ENCODE measurements at regions of chr12 and their contacts with region 1.

Region 1: GRCh38 chr12:6788972-6789924 is at the start of gene CD4:
- DNase-seq: no peak
- H3K4me3 ChIP-seq: no peak within 1 kb of the TSS
- H3K27ac ChIP-seq: no peak within 1 kb of the TSS
- H3K4me1 ChIP-seq: no peaks in the 10 kb centered on the region
- H3K27me3 ChIP-seq: no peaks in the 10 kb centered on the region
- CTCF ChIP-seq: no peak
- EP300 ChIP-seq: no peak
- POLR2A ChIP-seq: no peak
- total RNA-seq, gene CD4: 2.1 to 12.5 (median 10.3) TPM

Region 2: DNA sequence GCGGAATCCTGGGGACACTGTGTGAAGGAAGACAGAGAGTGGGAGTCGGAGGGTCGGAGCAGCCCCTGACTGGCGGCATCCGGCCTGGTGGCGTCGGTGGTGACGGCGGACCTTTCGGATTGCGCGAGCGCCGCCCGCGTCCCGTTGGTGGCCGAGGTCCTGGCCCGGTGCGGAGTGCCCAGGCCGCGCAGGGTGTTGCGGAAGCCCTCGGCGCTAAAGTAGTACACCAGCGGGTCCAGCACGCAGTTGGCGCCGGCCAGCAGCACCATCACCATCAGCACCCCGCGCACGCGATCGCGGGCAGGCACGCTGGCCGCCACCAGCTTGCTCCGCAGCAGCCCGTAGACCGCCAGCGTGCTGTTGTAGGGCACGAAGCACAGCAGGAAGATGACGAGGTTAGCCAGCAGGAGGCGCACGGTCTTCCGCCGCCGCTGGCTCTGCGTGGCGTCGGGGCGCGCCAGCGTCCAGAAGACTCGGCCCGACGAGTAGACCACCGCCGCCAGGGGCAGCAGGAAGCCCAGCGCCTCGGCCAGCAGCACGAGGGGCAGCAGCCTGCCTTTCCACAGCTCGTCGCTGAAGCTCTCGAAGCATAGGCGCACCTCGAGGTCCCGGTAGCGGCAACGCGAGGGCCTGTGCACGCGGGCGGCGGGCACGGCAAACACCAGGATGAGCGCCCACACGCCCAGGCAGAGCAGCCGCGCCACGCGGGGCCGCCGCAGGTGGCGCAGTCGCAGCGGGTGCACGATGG is 168.9 kb before region 1 on chr12:
- intact Hi-C with region 1: loop called in 1 of 4 experiments (anchors 10 kb)
- DNase-seq: peak in 1 of 5 donors; percentile 30
- H3K4me3 ChIP-seq: no peak overlapping the region
- H3K27ac ChIP-seq: no peak overlapping the region
- H3K4me1 ChIP-seq: no peaks in the 10 kb centered on the region
- H3K27me3 ChIP-seq: no peaks in the 10 kb centered on the region
- CTCF ChIP-seq: no peak
- EP300 ChIP-seq: no peak
- POLR2A ChIP-seq: no peak

Region 3: DNA sequence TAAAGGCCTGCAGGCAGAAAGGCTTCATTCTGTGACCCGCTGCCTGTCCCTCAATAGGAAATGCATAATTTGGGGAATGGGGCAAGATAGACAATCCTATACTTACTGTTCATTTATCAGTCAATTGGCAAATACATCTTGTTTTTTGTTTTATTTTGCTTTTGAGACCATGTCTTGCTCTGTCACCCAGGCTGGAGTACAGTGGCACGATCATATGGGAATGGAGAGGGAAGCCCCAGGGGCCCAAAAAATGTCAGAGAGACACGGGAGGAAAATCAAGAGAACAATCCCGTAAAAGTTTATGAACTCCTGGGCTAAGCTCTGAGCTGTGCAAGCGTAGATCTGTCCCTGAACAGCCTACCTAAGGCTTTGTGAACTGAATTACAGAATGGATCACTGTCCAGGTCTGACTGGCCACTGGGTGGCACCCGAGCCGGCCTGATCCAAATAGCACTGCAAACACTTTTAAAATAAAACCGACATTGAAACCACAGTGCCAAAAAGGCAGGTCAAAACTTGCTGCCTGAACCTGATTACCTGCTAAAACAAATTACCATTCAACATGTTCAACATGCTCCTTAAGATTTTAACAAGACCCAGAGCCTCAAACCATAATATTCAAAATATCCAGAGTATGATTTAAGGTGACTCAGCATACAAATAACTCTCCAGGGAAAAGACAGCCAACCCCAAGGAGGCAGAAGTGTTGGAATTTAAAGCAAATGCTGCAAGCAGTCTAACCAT is 53.6 kb before region 1 on chr12:
- intact Hi-C with region 1: loop called in 1 of 4 experiments (anchors 10 kb)
- DNase-seq: peak; percentile 54 to 79 (median 75)
- H3K4me3 ChIP-seq: no peak overlapping the region
- H3K27ac ChIP-seq: no peak overlapping the region
- H3K4me1 ChIP-seq: no peaks in the 10 kb centered on the region
- H3K27me3 ChIP-seq: no peaks in the 10 kb centered on the region
- CTCF ChIP-seq: peak; percentile 63 to 76 (median 71)
- EP300 ChIP-seq: no peak
- POLR2A ChIP-seq: no peak

Region 4: DNA sequence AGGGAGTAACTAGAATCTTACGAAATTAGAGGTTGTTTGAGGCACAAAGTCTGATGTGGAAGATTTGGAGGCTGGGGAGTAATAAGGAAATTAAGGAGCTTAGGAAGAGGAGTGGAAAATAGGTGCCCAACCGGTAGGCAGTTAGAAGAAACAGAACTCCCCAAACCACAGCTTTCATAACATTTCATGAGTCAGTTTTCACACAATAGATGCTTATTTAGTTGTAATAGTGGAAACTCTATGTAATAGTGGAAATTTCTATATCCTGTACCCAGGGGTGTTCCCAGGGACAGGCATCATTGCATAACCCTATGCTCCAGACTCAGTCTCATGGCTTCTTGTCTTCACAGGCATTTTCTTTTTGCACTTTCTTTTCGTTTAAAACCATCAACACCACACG is 1268.6 kb after region 1 on chr12:
- intact Hi-C with region 1: loop called in 1 of 4 experiments (anchors 5 kb)
- DNase-seq: no peak
- H3K4me3 ChIP-seq: no peak overlapping the region
- H3K27ac ChIP-seq: no peak overlapping the region
- H3K4me1 ChIP-seq: no peaks in the 10 kb centered on the region
- H3K27me3 ChIP-seq: no peaks in the 10 kb centered on the region
- CTCF ChIP-seq: no peak
- EP300 ChIP-seq: no peak
- POLR2A ChIP-seq: no peak